ENCODE measurements at regions of chr21 and their contacts with region 1.

Region 1: DNA sequence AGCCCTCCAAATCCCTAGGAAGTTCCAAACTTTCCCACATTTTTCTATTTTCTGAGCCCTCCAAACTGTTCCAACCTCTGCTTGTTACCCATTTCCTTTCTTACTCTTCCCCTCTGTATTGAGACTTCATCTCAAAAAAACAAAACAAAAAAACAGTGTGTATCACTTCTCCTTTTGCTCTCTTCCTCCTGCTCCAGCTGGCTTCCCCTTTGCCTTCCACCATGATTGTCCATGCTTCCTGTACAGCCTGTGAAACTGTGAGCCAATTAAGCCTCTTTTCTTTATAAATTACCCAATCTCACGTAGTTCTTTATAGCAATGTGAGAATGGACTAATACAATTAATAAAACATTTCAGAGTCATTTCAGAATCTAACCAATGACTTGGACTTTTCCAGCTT is 69.6 kb upstream of the KRTAP19-8 start:
- DNase-seq: no peak
- ATAC-seq: peak; percentile 70
- H3K4me3 ChIP-seq: no peak overlapping the region
- H3K27ac ChIP-seq: no peak overlapping the region
- H3K4me1 ChIP-seq: peaks cover 11% of the 10 kb centered on the region; the same call in 1 of the 2 replicates
- H3K27me3 ChIP-seq: no peaks in the 10 kb centered on the region
- CTCF ChIP-seq: no peak
- EP300 ChIP-seq: no peak
- POLR2A ChIP-seq: no peak
- RAD21 ChIP-seq: no peak

Region 2: GRCh38 chr21:31132574-31133242 is 24.8 kb after region 1 on chr21:
- CTCF ChIA-PET with region 1: interaction called, 13 read pairs
- POLR2A ChIA-PET with region 1: no interaction called
- RAD21 ChIA-PET with region 1: interaction called, 11 read pairs
- SMC1A ChIA-PET with region 1: interaction called, 7 read pairs
- in situ Hi-C with region 1: no loop called
- intact Hi-C with region 1: loop called (anchors 2 kb)
- DNase-seq: peak; percentile 93
- ATAC-seq: peak; percentile 85
- H3K4me3 ChIP-seq: no peak overlapping the region
- H3K27ac ChIP-seq: no peak overlapping the region
- H3K4me1 ChIP-seq: peaks cover 15% of the 10 kb centered on the region
- H3K27me3 ChIP-seq: no peaks in the 10 kb centered on the region
- CTCF ChIP-seq: no peak
- EP300 ChIP-seq: peak; percentile 23 to 82; a peak in 3 of 4 replicates
- POLR2A ChIP-seq: no peak
- RAD21 ChIP-seq: no peak

Region 3: GRCh38 chr21:31604591-31605190 is 496.8 kb after region 1 on chr21:
- CTCF ChIA-PET with region 1: interaction called, 7 read pairs
- POLR2A ChIA-PET with region 1: no interaction called
- RAD21 ChIA-PET with region 1: interaction called, 4 read pairs
- SMC1A ChIA-PET with region 1: interaction called, 10 read pairs
- in situ Hi-C with region 1: no loop called
- intact Hi-C with region 1: no loop called
- DNase-seq: peak; percentile 19
- ATAC-seq: peak; percentile 94
- H3K4me3 ChIP-seq: no peak overlapping the region
- H3K27ac ChIP-seq: no peak overlapping the region
- H3K4me1 ChIP-seq: no peaks in the 10 kb centered on the region
- H3K27me3 ChIP-seq: no peaks in the 10 kb centered on the region
- CTCF ChIP-seq: peak; percentile 74 to 87 (median 85)
- EP300 ChIP-seq: no peak
- POLR2A ChIP-seq: no peak
- RAD21 ChIP-seq: peak; percentile 87

Measured in GM12878 (cell line).